Breast epithelium (tissue), 4 donors: ENCODE measurements at regions of chr2 and their contacts with region 1.

Region 1: GRCh38 chr2:157182834-157183396 is 74.6 kb upstream of the GALNT5 start:
- DNase-seq: no peak
- H3K4me3 ChIP-seq: no peak overlapping the region
- H3K27ac ChIP-seq: peak overlapping the region in 1 of 2 donors; percentile 48
- H3K4me1 ChIP-seq: no peaks in the 10 kb centered on the region
- H3K27me3 ChIP-seq: no peaks in the 10 kb centered on the region
- CTCF ChIP-seq: no peak
- POLR2A ChIP-seq: no peak

Region 2: DNA sequence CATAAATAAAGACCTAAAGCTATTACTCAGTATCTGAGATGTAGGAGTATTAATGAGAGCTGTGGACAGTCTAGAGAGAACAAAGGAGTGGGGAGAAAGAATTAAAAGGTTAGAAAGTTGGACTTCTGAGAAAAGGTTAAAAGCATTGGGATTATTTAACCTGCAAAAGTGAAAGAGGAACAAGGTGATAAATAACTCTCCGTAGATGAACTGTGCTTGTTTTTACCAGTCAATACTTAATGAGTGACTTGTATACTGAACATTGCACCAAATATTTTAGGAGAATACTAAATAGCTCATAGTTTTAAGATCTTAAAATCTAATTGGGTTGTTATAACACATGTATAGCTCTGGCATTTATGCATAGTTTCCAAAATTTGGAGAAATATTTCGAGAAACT is 609.2 kb before region 1 on chr2:
- intact Hi-C with region 1: no loop called
- DNase-seq: no peak
- H3K4me3 ChIP-seq: no peak overlapping the region
- H3K27ac ChIP-seq: no peak overlapping the region
- H3K4me1 ChIP-seq: no peaks in the 10 kb centered on the region
- H3K27me3 ChIP-seq: no peaks in the 10 kb centered on the region
- CTCF ChIP-seq: no peak
- POLR2A ChIP-seq: no peak

Region 3: DNA sequence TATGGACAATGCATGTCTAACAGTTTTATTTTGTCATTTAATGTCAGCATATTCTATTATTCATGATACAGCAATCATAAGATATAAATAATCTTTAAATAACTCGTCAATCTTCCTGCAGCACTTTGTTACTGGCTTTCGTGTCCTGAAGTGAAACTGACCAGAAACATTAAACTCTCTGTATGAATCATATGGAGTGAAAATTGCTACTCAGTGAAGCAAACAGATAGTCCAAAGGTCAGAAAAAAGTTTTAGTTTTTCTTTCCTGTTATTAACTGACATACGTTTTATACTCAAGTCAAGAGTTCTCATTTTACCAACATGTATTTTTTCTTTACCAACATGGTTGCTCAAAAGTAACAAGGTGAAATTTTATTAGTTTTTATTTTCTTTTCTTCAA is 32.2 kb before region 1 on chr2:
- intact Hi-C with region 1: loop called (anchors 2 kb)
- DNase-seq: no peak
- H3K4me3 ChIP-seq: no peak overlapping the region
- H3K27ac ChIP-seq: no peak overlapping the region
- H3K4me1 ChIP-seq: no peaks in the 10 kb centered on the region
- H3K27me3 ChIP-seq: no peaks in the 10 kb centered on the region
- CTCF ChIP-seq: no peak
- POLR2A ChIP-seq: no peak